Heart right ventricle (tissue), 16 donors: ENCODE measurements at regions of chr19 and their contacts with region 1.

Region 1: DNA sequence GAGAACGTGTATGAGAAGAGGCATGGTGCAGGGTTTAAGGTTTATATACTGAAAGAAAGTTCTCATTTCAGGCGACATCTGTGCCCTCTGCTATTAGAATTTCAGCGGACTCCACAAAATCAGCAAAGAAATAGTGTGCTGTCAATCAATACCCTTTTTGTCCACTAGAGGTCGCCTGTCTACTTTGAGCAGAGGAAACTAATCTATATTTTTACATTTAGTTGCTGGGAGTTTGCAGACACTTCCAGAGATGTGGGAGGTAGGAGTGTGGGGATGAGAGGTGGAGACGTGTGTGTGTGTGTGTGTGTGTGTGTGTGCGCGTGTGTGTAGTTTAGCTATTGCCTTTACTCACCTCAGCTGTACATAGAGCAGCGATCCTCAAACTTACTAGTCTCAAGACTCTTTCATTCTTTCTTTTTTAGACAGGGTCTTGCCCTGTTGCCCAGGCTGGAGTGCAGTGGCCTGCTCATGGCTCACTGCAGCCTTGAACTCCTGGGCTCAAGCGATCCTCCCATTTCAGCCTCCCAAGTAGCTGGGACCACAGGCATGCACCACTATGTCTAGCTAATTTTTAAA is 9.7 kb downstream of the INAFM1 start:
- DNase-seq: peak in 1 of 2 donors; percentile 55
- ATAC-seq: peak in 5 of 8 donors; percentile 20 to 51 (median 27)
- H3K4me3 ChIP-seq: no peak overlapping the region
- H3K27ac ChIP-seq: no peak overlapping the region
- H3K4me1 ChIP-seq: peaks cover 0 to 13% (median 4%) of the 10 kb centered on the region in 9 donors
- H3K27me3 ChIP-seq: no peaks in the 10 kb centered on the region
- CTCF ChIP-seq: peak; percentile 74 to 89 (median 82)

Region 2: GRCh38 chr19:47124937-47125668 is 159.3 kb before region 1 on chr19:
- intact Hi-C with region 1: no loop called
- DNase-seq: no peak
- ATAC-seq: peak; percentile 50 to 82 (median 76)
- H3K4me3 ChIP-seq: no peak overlapping the region
- H3K27ac ChIP-seq: no peak overlapping the region
- H3K4me1 ChIP-seq: peaks cover 0 to 4% (median 0%) of the 10 kb centered on the region in 9 donors
- H3K27me3 ChIP-seq: no peaks in the 10 kb centered on the region
- CTCF ChIP-seq: peak; percentile 61 to 82 (median 71)

Region 3: DNA sequence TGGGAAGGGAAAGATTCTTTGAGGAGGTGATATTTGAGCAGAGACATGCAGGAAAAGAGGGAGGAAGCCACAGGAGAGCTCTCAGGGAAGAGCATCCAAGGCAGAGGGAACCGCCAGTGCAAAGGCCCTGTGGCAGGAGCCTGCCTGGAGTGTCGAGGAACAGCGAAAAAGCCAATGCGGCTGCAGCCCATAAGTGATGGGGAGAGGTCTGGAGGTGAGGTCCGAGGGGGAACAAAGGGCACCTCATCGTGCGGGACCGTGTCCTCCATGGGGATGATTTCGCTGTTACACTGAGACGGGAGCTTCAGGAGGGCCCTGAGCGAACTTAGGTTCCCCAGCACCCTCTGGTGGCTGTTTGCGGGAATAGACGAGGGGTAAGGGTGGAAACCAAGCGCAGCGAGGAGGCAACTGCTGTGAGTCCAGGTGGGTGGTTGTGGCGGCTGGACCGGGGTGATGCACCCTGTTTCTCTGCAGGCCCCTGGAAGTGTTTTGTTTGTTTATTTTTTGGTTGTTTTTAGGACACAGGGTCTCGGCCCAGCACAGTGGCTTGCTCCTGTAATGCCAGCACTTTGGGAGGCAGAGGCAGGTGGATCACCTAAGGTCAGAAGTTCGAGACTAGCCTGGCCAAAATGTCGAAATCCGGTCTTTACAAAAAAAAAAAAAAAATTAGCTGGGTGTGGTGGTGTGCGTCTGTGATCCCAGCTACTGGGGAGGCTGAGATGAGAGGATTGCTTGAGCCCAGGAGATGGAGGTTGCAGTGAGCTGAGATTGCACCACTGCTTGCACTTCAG is 422.9 kb after region 1 on chr19:
- intact Hi-C with region 1: loop called in 2 of 10 experiments (anchors 10 kb)
- DNase-seq: peak; percentile 58 to 68
- ATAC-seq: peak; percentile 61 to 87 (median 82)
- H3K4me3 ChIP-seq: no peak overlapping the region
- H3K27ac ChIP-seq: no peak overlapping the region
- H3K4me1 ChIP-seq: no peaks in the 10 kb centered on the region
- H3K27me3 ChIP-seq: peaks cover 0 to 12% (median 0%) of the 10 kb centered on the region in 7 donors
- CTCF ChIP-seq: peak; percentile 52 to 84 (median 77)